ENCODE measurements at regions of chr13 and their contacts with region 1.

Region 1: DNA sequence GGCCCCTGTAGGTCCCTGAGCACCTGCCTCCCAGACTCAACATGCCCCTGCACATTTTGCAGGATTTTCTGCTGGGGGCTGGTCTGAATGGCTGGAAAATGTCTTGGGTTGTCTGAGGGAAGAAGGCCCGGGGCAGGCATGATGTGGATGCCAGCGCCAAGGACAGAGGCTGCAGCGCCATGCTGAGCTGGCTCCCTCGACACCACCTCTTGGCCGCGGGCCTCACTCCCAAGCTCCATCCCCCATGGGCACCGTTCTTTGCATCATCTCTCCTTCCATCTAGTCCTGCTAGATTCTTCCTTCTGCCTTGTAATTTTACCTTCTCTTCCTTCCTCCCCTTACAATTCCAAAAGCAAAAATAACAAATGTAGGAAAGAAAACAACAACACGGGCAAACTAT is 70.6 kb downstream of the ZIC5 start:
- H3K4me3 ChIP-seq: no peak overlapping the region
- H3K27ac ChIP-seq: no peak overlapping the region
- H3K4me1 ChIP-seq: 0 out of 2 replicates have a peak, but pooled peaks cover 2% of the 10 kb centered on the region
- CTCF ChIP-seq: no peak

Region 2: DNA sequence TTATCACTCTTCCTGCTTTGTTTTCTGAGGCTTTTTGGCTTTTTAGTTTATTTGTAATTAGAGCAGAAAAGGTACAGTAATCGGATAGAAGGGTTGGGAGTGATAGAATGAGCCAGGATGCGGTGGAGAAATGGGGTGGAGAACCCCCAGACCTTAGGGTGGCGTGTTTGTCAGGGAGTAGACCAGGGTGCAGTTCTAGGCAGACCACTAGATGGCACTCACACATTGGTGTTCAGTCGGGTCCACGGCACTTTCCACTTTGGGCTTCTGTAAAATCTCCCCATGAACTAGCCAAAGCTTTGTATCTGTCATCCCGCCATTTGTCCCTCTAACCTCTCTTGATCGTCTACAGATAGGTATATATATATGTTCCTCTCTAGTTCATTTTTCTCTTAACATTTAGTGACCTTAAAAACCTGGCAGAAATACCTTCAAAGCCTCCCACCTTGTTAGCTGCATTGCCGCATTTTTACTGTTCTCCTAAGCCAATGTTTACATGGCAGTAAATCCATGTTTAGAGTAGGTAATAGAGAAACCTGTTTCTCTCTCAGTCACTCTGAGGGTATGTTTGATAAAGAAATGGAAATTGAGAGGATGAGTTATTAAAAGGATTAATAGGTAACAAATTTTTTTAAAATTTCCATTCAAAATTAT is 244.7 kb before region 1 on chr13:
- CTCF ChIA-PET with region 1: interaction called, 15 read pairs
- POLR2A ChIA-PET with region 1: no interaction called
- H3K4me3 ChIP-seq: no peak overlapping the region
- H3K27ac ChIP-seq: no peak overlapping the region
- H3K4me1 ChIP-seq: peaks cover 7% of the 10 kb centered on the region; the same call in 1 of the 2 replicates
- CTCF ChIP-seq: no peak; the same call in 1 of the 2 replicates

Region 3: GRCh38 chr13:100235311-100235901 is 334.4 kb after region 1 on chr13:
- CTCF ChIA-PET with region 1: interaction called, 14 read pairs
- POLR2A ChIA-PET with region 1: no interaction called
- H3K4me3 ChIP-seq: no peak overlapping the region
- H3K27ac ChIP-seq: no peak overlapping the region
- H3K4me1 ChIP-seq: peaks cover 8% of the 10 kb centered on the region; the same call in 1 of the 2 replicates
- CTCF ChIP-seq: no peak

Measured in HEK293 (cell line).